CD4-positive, alpha-beta T cell (primary cell): ENCODE measurements at regions of chr1 and their contacts with region 1.

Region 1: GRCh38 chr1:46166521-46167462 is 8.1 kb upstream of the TSPAN1 start:
- DNase-seq: peak; percentile 15 to 72 (median 55)
- ATAC-seq: peak; percentile 87
- H3K4me3 ChIP-seq: peak overlapping the region; percentile 69
- H3K4me3 Mint-ChIP-seq: peak overlapping the region; percentile 93
- H3K27ac ChIP-seq: peak overlapping the region; percentile 44 to 63
- H3K27ac Mint-ChIP-seq: peak overlapping the region; percentile 93
- H3K4me1 ChIP-seq: peaks cover 16% of the 10 kb centered on the region
- H3K4me1 Mint-ChIP-seq: peaks cover 18% of the 10 kb centered on the region
- H3K27me3 ChIP-seq: no peaks in the 10 kb centered on the region
- H3K27me3 Mint-ChIP-seq: no peaks in the 10 kb centered on the region
- CTCF ChIP-seq: no peak

Region 2: DNA sequence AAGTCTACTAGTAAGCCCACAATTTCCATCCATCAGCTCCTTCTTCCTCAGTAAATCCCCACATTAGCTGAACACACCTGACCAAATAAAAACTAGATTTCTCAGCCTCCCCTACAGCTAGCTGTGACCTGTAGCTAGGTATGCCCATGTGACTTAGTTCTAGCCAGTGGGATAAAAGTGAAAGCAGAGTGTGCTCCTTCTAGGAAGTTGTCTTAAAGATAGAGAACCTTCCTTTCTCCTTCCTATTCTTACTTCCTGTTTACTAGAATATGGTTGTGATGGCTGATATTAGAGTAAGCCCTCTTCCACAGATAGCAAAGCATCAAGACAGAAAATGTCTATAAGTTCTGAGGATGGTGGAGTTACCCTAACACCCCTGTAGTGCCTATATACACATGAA is 101.4 kb before region 1 on chr1:
- CTCF ChIA-PET with region 1: no interaction called
- POLR2A ChIA-PET with region 1: interaction called, 10 read pairs
- intact Hi-C with region 1: no loop called
- DNase-seq: peak in 4 of 14 experiments; percentile 5 to 70 (median 51)
- ATAC-seq: peak; percentile 84
- H3K4me3 ChIP-seq: no peak overlapping the region
- H3K4me3 Mint-ChIP-seq: peak overlapping the region; percentile 68
- H3K27ac ChIP-seq: no peak overlapping the region
- H3K27ac Mint-ChIP-seq: peak overlapping the region; percentile 63
- H3K4me1 ChIP-seq: peaks cover 11% of the 10 kb centered on the region
- H3K4me1 Mint-ChIP-seq: peaks cover 34% of the 10 kb centered on the region
- H3K27me3 ChIP-seq: no peaks in the 10 kb centered on the region
- H3K27me3 Mint-ChIP-seq: no peaks in the 10 kb centered on the region
- CTCF ChIP-seq: no peak

Region 3: DNA sequence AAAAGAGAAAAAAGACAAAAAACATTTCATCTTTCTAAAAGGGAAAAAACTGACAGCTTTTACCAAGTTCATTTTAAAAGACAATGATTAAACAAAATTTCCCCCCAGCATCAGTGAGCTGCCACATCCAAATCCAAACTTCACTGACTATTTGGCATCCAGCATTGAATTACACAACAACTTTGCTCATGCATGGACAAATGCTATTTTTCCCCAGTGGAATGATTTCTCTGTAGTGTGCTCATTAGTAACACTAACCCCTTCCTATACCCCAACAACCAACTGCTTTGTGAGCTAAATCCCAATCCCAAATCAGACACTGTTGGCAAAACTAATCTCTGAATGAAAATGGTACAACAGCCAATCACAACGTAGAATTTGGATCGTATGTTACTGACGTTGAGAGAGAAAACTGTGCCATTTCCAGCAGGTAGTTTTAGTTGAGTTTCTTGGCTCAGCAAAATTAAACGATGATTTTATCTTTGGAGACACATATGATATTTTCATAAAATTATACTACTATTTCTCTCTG is 72.3 kb before region 1 on chr1:
- CTCF ChIA-PET with region 1: no interaction called
- POLR2A ChIA-PET with region 1: no interaction called
- intact Hi-C with region 1: no loop called
- DNase-seq: no peak
- ATAC-seq: no peak
- H3K4me3 ChIP-seq: no peak overlapping the region
- H3K4me3 Mint-ChIP-seq: no peak overlapping the region
- H3K27ac ChIP-seq: no peak overlapping the region
- H3K27ac Mint-ChIP-seq: no peak overlapping the region
- H3K4me1 ChIP-seq: no peaks in the 10 kb centered on the region
- H3K4me1 Mint-ChIP-seq: no peaks in the 10 kb centered on the region
- H3K27me3 ChIP-seq: no peaks in the 10 kb centered on the region
- H3K27me3 Mint-ChIP-seq: no peaks in the 10 kb centered on the region
- CTCF ChIP-seq: no peak

Region 4: GRCh38 chr1:46132529-46133180 is 34.1 kb before region 1 on chr1 and contains the start of gene PIK3R3:
- CTCF ChIA-PET with region 1: no interaction called
- POLR2A ChIA-PET with region 1: interaction called, 17 read pairs
- intact Hi-C with region 1: no loop called
- DNase-seq: peak; percentile 55 to 95 (median 74)
- ATAC-seq: peak; percentile 86
- H3K4me3 ChIP-seq: peak within 1 kb of the TSS; percentile 91
- H3K4me3 Mint-ChIP-seq: peak within 1 kb of the TSS; percentile 93
- H3K27ac ChIP-seq: peak within 1 kb of the TSS in 1 of 2 donors; percentile 78
- H3K27ac Mint-ChIP-seq: peak within 1 kb of the TSS; percentile 10
- H3K4me1 ChIP-seq: peaks cover 23% of the 10 kb centered on the region
- H3K4me1 Mint-ChIP-seq: peaks cover 30% of the 10 kb centered on the region
- H3K27me3 ChIP-seq: peaks cover 22 to 32% of the 10 kb centered on the region in 2 experiments
- H3K27me3 Mint-ChIP-seq: peaks cover 66% of the 10 kb centered on the region
- CTCF ChIP-seq: no peak
- total RNA-seq, gene PIK3R3: 0.20 to 0.38 TPM

Region 5: GRCh38 chr1:46221749-46222148 is 55.0 kb after region 1 on chr1:
- CTCF ChIA-PET with region 1: no interaction called
- POLR2A ChIA-PET with region 1: no interaction called
- intact Hi-C with region 1: no loop called
- DNase-seq: no peak
- ATAC-seq: no peak
- H3K4me3 ChIP-seq: no peak overlapping the region
- H3K4me3 Mint-ChIP-seq: no peak overlapping the region
- H3K27ac ChIP-seq: no peak overlapping the region
- H3K27ac Mint-ChIP-seq: no peak overlapping the region
- H3K4me1 ChIP-seq: peaks cover 4% of the 10 kb centered on the region
- H3K4me1 Mint-ChIP-seq: no peaks in the 10 kb centered on the region
- H3K27me3 ChIP-seq: no peaks in the 10 kb centered on the region
- H3K27me3 Mint-ChIP-seq: no peaks in the 10 kb centered on the region
- CTCF ChIP-seq: no peak

Region 6: GRCh38 chr1:47650197-47650596 is 1483.4 kb after region 1 on chr1:
- CTCF ChIA-PET with region 1: no interaction called
- POLR2A ChIA-PET with region 1: no interaction called
- intact Hi-C with region 1: no loop called
- DNase-seq: no peak
- ATAC-seq: no peak
- H3K4me3 ChIP-seq: no peak overlapping the region
- H3K4me3 Mint-ChIP-seq: no peak overlapping the region
- H3K27ac ChIP-seq: no peak overlapping the region
- H3K27ac Mint-ChIP-seq: no peak overlapping the region
- H3K4me1 ChIP-seq: no peaks in the 10 kb centered on the region
- H3K4me1 Mint-ChIP-seq: no peaks in the 10 kb centered on the region
- H3K27me3 ChIP-seq: no peaks in the 10 kb centered on the region
- H3K27me3 Mint-ChIP-seq: peaks cover 38% of the 10 kb centered on the region
- CTCF ChIP-seq: no peak